AG04450 (cell line): ENCODE measurements at regions of chr5 and their contacts with region 1.

Region 1: GRCh38 chr5:139293504-139294373 is at the start of gene MATR3:
- DNase-seq: peak; percentile 91
- H3K4me3 ChIP-seq: peak within 1 kb of the TSS; percentile 96
- H3K27ac ChIP-seq: peak within 1 kb of the TSS; percentile 99
- H3K27me3 ChIP-seq: no peaks in the 10 kb centered on the region
- CTCF ChIP-seq: no peak
- polyA plus RNA-seq, gene MATR3: 142 and 166 TPM in 2 replicates

Region 2: DNA sequence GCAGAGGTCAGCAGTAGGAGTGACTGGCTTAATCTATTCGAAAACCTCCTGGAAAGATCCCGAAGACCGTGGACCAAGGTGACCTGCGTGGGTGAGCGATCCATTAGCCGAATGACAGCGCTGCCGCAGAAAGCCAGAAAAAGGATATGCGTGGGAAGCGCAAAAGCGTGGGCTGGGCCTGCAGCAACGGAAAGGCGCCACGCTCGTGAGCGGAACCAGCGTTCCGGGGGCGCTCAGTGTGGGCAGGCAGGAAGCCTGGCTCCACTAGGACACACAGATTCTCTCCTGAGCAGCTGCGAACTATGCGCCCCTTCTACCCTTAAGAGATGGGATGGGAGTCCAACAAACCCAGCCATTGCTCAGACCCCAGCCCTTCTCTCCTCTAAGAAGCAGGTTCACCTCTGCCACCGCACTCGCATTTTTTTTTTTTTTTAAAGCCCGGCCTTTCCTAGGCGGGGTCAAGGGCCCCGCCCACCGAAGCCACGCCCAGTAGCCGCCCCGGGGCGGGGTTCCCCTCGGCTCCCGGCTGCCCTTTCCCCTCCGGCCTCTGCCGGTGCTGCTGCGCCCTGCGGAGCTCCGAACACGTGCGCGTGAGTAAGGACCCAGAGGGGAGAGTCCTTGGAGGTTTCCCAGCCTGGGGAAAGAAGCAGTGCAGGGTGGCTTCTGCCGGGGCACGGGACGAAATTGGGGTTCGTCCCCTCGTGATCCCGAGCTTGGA is 20.0 kb before region 1 on chr5:
- CTCF ChIA-PET with region 1: interaction called, 5 read pairs
- POLR2A ChIA-PET with region 1: interaction called, 25 read pairs
- DNase-seq: peak; percentile 55
- H3K4me3 ChIP-seq: peak overlapping the region; percentile 82
- H3K27ac ChIP-seq: peak overlapping the region; percentile 91
- H3K27me3 ChIP-seq: no peaks in the 10 kb centered on the region
- CTCF ChIP-seq: no peak

Region 3: DNA sequence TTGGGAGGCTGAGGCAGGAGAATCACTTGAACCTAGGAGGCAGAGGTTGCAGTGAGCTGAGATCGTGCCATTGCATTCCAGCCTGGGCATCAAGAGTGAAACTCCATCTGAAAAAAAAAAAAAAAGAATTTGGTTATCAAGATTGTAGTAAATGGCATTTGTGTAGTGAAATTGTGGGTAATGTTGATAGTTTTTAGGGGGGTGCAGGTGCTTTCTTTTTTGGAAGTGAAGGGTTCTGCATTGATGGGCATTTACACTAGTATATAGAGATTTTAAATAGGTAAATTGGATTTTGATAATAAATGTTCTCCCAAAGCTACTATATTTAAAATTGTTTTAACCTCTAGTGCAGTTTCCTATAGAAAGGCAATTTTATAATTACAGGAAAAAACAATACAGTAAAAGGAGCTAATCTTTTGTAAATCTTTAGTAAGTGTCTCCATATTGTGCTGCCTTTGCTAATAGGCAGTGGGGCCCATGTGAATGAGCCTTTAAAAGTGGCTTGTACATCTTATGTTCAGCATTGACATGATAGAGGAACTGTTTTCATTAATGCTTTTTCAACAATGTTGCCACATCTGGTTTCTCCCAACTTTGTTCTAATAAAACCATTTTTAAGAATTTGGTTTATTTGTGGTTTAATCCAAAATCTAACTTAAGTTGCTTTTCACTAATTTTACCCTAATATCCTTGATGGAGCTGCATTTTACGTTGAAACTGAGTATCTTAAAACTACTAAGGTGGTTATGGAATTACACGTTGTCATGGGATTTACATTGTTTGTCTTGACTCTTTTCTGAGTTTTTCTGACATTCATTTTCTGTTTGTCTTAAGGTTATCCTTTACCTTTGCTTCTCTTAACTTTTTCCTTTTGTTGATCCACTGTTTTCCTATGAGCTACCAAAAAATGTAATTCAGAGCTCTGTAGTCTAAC is 10.9 kb after region 1 on chr5:
- CTCF ChIA-PET with region 1: interaction called, 4 read pairs
- POLR2A ChIA-PET with region 1: interaction called, 27 read pairs
- DNase-seq: no peak
- H3K4me3 ChIP-seq: no peak overlapping the region
- H3K27ac ChIP-seq: no peak overlapping the region
- H3K27me3 ChIP-seq: no peaks in the 10 kb centered on the region
- CTCF ChIP-seq: no peak

Region 4: DNA sequence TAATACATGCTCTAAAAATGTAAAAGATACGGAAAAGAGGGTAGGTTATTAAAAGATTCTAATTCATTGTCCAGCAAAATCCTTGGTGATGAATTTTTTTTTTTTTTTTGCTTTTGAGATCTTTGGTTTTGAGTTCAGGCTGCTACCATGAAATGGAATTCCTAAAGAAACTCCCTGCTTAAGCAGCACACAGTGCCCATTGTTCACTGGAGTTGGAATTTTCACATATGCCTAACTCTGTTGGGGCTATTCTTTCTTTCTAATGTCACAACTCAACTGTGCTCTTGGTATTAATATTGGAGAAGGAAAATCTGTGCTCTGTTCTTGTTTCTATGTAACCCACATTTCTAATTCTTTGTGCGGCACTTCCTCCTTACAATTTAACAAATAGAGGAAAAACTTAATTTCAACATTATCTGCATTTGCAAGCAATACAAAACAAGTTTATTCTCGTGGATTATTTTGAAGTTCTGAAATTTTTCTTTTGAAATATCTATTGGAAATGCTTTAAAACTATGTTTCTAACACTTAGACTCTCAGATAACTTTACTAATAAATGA is 21.4 kb after region 1 on chr5:
- CTCF ChIA-PET with region 1: interaction called, 5 read pairs
- POLR2A ChIA-PET with region 1: interaction called, 10 read pairs
- DNase-seq: no peak
- H3K4me3 ChIP-seq: no peak overlapping the region
- H3K27ac ChIP-seq: no peak overlapping the region
- H3K27me3 ChIP-seq: no peaks in the 10 kb centered on the region
- CTCF ChIP-seq: no peak

Region 5: DNA sequence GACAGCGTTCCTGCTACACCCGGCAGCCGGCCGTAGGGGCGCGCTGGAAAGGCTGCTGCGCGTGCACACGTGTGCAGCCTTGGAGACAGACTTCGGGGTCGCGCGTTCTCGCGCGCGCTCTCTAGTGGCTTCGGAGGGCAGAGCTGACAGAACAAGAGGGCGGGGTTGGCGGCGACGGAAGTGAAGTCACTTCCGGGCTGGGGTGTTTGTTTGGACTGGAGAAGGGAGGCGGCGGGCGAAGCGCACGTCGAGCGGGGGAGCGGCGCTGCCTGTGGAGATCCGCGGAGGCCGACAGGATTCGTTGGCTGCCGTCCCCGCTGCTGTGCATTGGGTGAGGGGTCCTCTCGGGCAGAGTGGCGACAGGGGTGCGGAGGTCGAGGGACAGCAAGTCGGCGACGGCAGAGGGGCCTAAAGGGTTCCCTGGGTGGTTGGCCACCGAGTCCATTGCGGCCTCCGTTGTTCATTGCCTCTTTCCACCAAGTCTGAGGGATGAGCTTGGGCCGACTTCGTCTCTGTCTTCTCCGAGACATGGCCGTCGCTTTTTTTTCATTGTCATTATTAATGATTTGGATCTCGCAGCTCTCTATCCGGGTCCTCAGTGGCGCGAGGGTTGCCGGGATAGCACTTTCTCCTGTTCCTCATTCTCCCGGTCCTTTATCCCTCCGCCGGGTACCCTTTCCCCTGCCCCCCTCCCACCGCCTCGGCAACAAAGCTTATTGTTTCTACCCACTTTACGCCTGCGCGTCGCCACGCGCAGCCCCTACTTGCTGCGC is 48.1 kb after region 1 on chr5 and contains the start of gene PAIP2:
- CTCF ChIA-PET with region 1: interaction called, 4 read pairs
- POLR2A ChIA-PET with region 1: interaction called, 27 read pairs
- DNase-seq: peak; percentile 95
- H3K4me3 ChIP-seq: peak within 1 kb of the TSS; percentile 100
- H3K27ac ChIP-seq: peak within 1 kb of the TSS; percentile 99
- H3K27me3 ChIP-seq: no peaks in the 10 kb centered on the region
- CTCF ChIP-seq: peak; percentile 71
- polyA plus RNA-seq, gene PAIP2: 76.3 and 113 TPM in 2 replicates